Esophagus muscularis mucosa (tissue), 4 donors: ENCODE measurements at regions of chr3 and their contacts with region 1.

Region 1: DNA sequence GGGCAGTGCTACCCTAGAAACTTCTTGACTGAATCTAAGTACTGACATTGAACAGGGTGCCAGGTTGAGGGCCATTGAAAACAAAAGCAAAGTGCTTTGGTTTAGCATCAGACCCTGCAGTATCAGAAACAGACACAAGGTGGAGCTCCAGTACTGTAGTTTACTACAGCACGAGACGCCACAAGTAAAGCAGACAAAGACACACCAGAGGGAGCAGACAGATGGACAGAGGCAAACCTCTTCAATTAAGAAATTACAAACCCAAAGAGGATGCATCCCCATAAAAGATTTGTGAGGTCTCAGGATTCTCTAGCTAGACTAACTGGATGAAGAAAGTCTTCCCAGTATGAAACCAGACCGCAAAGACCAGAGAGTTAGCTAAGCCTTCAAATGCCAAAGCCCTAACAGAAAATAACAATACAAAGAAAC is 16.6 kb downstream of the TOP2B start:
- DNase-seq: no peak
- H3K4me3 ChIP-seq: no peak overlapping the region
- H3K27ac ChIP-seq: no peak overlapping the region
- H3K4me1 ChIP-seq: peaks cover 17 to 37% (median 27%) of the 10 kb centered on the region in 4 donors
- H3K27me3 ChIP-seq: no peaks in the 10 kb centered on the region
- CTCF ChIP-seq: peak; percentile 87 to 92 (median 88)
- EP300 ChIP-seq: no peak
- POLR2A ChIP-seq: no peak

Region 2: GRCh38 chr3:25621087-25621486 is 27.0 kb before region 1 on chr3:
- intact Hi-C with region 1: no loop called
- DNase-seq: no peak
- H3K4me3 ChIP-seq: no peak overlapping the region
- H3K27ac ChIP-seq: no peak overlapping the region
- H3K4me1 ChIP-seq: no peaks in the 10 kb centered on the region
- H3K27me3 ChIP-seq: no peaks in the 10 kb centered on the region
- CTCF ChIP-seq: no peak
- EP300 ChIP-seq: no peak
- POLR2A ChIP-seq: no peak

Region 3: GRCh38 chr3:25782938-25783660 is 135.0 kb after region 1 on chr3 and contains the start of gene NGLY1:
- intact Hi-C with region 1: loop called (anchors 5 kb)
- DNase-seq: peak; percentile 95
- H3K4me3 ChIP-seq: peak within 1 kb of the TSS; percentile 92 to 97 (median 92)
- H3K27ac ChIP-seq: peak within 1 kb of the TSS; percentile 92 to 95 (median 92)
- H3K4me1 ChIP-seq: peaks cover 16 to 26% (median 22%) of the 10 kb centered on the region in 4 donors
- H3K27me3 ChIP-seq: no peaks in the 10 kb centered on the region
- CTCF ChIP-seq: peak; percentile 17 to 50 (median 21)
- EP300 ChIP-seq: no peak
- POLR2A ChIP-seq: peak; percentile 72
- total RNA-seq, gene NGLY1: 21.2 to 25.7 (median 23.3) TPM

Region 4: DNA sequence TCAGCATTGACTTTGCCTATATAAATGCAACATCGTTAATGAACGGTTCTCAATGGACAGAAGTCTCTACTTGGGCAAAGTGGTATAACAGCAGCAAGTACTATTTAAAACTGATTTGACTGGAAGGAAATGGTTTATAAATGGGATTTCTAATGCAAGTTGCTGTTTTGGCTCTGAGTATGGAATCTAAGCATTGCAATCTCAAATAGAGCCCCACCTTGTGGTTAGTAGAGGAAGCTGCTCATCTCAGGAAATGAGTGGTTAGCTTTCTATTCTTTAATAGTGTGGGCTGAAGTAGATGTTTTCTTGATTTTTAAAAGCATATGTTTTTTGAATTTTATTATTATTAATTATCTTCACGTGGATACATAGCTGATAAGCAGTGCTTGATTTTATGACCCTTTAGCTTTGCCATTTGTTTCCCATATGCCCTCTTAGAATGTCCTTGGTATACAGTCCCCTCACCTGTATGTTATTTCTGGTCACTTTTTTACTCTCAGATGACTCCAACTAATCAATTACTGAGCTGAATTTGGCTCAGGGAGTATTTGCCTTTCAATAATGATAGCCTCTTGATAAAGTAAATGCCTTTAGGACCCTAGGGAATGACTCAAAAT is 208.9 kb after region 1 on chr3:
- intact Hi-C with region 1: loop called (anchors 5 kb)
- DNase-seq: no peak
- H3K4me3 ChIP-seq: no peak overlapping the region
- H3K27ac ChIP-seq: no peak overlapping the region
- H3K4me1 ChIP-seq: peaks cover 0 to 15% (median 10%) of the 10 kb centered on the region in 4 donors
- H3K27me3 ChIP-seq: no peaks in the 10 kb centered on the region
- CTCF ChIP-seq: peak; percentile 27 to 63 (median 48)
- EP300 ChIP-seq: no peak
- POLR2A ChIP-seq: no peak

Region 5: GRCh38 chr3:26712211-26713026 is 1064.3 kb after region 1 on chr3:
- intact Hi-C with region 1: loop called (anchors 5 kb)
- DNase-seq: no peak
- H3K4me3 ChIP-seq: no peak overlapping the region
- H3K27ac ChIP-seq: no peak overlapping the region
- H3K4me1 ChIP-seq: peaks cover 0 to 11% (median 6%) of the 10 kb centered on the region in 4 donors
- H3K27me3 ChIP-seq: no peaks in the 10 kb centered on the region
- CTCF ChIP-seq: peak; percentile 54 to 72 (median 64)
- EP300 ChIP-seq: no peak
- POLR2A ChIP-seq: no peak